Caco-2 (cell line): ENCODE measurements at regions of chr13 and their contacts with region 1.

Region 1: DNA sequence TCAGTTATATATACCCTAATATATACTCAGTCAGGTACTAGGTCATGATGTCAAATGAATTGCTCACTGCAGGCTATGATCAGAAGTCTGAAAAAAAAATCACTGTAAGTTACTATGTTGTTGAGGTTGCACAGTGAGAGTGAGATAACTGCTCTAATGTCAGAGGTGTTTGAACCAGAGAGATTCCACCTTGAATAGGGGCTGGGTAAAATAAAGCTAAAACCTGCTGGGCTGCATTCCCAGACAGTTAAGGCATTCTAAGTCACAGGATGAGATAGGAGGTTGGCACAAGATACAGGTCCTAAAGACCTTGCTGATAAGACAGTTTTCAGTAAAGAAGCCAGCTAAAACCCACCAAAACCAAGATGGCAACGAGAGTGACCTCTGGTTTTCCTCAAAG is 10.2 kb downstream of the EPSTI1 start:
- DNase-seq: peak; percentile 82
- H3K4me3 ChIP-seq: no peak overlapping the region
- H3K4me3 Mint-ChIP-seq: peak overlapping the region; percentile 34
- H3K27ac Mint-ChIP-seq: peak overlapping the region; percentile 95
- H3K4me1 ChIP-seq: peaks cover 67% of the 10 kb centered on the region
- H3K4me1 Mint-ChIP-seq: peaks cover 72% of the 10 kb centered on the region
- H3K27me3 ChIP-seq: no peaks in the 10 kb centered on the region
- H3K27me3 Mint-ChIP-seq: no peaks in the 10 kb centered on the region
- CTCF ChIP-seq: no peak

Region 2: GRCh38 chr13:42991892-42992763 is 10.3 kb after region 1 on chr13 and contains the start of gene EPSTI1:
- CTCF ChIA-PET with region 1: interaction called, 3 read pairs
- POLR2A ChIA-PET with region 1: interaction called, 4 read pairs
- intact Hi-C with region 1: loop called (anchors 1 kb)
- DNase-seq: peak; percentile 84 to 92
- H3K4me3 ChIP-seq: peak within 1 kb of the TSS; percentile 59
- H3K4me3 Mint-ChIP-seq: peak within 1 kb of the TSS; percentile 91
- H3K27ac Mint-ChIP-seq: peak within 1 kb of the TSS; percentile 91
- H3K4me1 ChIP-seq: peaks cover 49% of the 10 kb centered on the region
- H3K4me1 Mint-ChIP-seq: peaks cover 33% of the 10 kb centered on the region
- H3K27me3 ChIP-seq: no peaks in the 10 kb centered on the region
- H3K27me3 Mint-ChIP-seq: no peaks in the 10 kb centered on the region
- CTCF ChIP-seq: no peak
- total RNA-seq, gene EPSTI1: 80.6 and 86.5 TPM in 2 replicates

Region 3: GRCh38 chr13:43596924-43597598 is 615.2 kb after region 1 on chr13:
- CTCF ChIA-PET with region 1: no interaction called
- POLR2A ChIA-PET with region 1: no interaction called
- intact Hi-C with region 1: no loop called
- DNase-seq: no peak
- H3K4me3 ChIP-seq: no peak overlapping the region
- H3K4me3 Mint-ChIP-seq: no peak overlapping the region
- H3K27ac Mint-ChIP-seq: no peak overlapping the region
- H3K4me1 ChIP-seq: peaks cover 15% of the 10 kb centered on the region; the same call in 1 of the 2 replicates
- H3K4me1 Mint-ChIP-seq: peaks cover 31% of the 10 kb centered on the region
- H3K27me3 ChIP-seq: no peaks in the 10 kb centered on the region
- H3K27me3 Mint-ChIP-seq: no peaks in the 10 kb centered on the region
- CTCF ChIP-seq: no peak